Mammary epithelial cell (primary cell): ENCODE measurements at regions of chr5 and their contacts with region 1.

Region 1: GRCh38 chr5:34522599-34523386 is 133.3 kb upstream of the RAI14 start:
- DNase-seq: peak; percentile 73
- H3K4me3 ChIP-seq: no peak overlapping the region
- H3K27ac ChIP-seq: no peak overlapping the region
- H3K4me1 ChIP-seq: peaks cover 19% of the 10 kb centered on the region
- H3K27me3 ChIP-seq: no peaks in the 10 kb centered on the region
- CTCF ChIP-seq: peak; percentile 71 to 74

Region 2: DNA sequence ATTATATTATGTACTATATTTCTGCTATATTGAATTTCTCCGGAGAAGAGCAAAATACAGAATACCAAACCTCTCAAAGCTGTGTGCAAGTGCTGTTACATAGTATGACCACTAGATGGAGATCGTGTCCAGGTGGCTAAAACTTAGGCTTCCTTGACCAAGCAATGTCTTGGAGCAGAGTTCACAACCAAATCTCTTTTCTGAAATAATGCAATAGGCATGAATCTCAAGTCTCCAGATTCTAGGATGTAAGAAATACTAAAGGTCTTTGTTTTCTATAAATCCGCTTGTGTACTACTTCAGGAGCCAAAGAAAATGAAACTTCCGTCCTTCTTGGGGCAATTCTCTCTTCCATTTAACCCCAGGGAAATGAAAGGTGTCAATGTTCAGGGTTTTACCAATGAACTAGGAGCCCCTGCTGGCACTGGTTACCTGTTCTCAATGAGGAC is 48.2 kb before region 1 on chr5:
- CTCF ChIA-PET with region 1: no interaction called
- dilution Hi-C with region 1: no loop called
- in situ Hi-C with region 1: no loop called
- intact Hi-C with region 1: loop called (anchors 1 kb)
- DNase-seq: peak; percentile 43
- H3K4me3 ChIP-seq: no peak overlapping the region
- H3K27ac ChIP-seq: no peak overlapping the region
- H3K4me1 ChIP-seq: no peaks in the 10 kb centered on the region
- H3K27me3 ChIP-seq: no peaks in the 10 kb centered on the region
- CTCF ChIP-seq: peak; percentile 96 to 98

Region 3: GRCh38 chr5:34608859-34609648 is 86.3 kb after region 1 on chr5:
- CTCF ChIA-PET with region 1: no interaction called
- dilution Hi-C with region 1: no loop called
- in situ Hi-C with region 1: no loop called
- intact Hi-C with region 1: loop called (anchors 5 kb)
- DNase-seq: peak; percentile 82
- H3K4me3 ChIP-seq: no peak overlapping the region
- H3K27ac ChIP-seq: peak overlapping the region; percentile 59
- H3K4me1 ChIP-seq: peaks cover 33% of the 10 kb centered on the region
- H3K27me3 ChIP-seq: no peaks in the 10 kb centered on the region
- CTCF ChIP-seq: no peak

Region 4: GRCh38 chr5:34838785-34839714 is 316.3 kb after region 1 on chr5 and contains the start of gene TTC23L:
- CTCF ChIA-PET with region 1: no interaction called
- dilution Hi-C with region 1: no loop called
- in situ Hi-C with region 1: no loop called
- intact Hi-C with region 1: loop called (anchors 10 kb)
- DNase-seq: peak; percentile 91
- H3K4me3 ChIP-seq: peak within 1 kb of the TSS; percentile 42 to 62 (median 57)
- H3K27ac ChIP-seq: peak within 1 kb of the TSS; percentile 46
- H3K4me1 ChIP-seq: no peaks in the 10 kb centered on the region
- H3K27me3 ChIP-seq: no peaks in the 10 kb centered on the region
- CTCF ChIP-seq: no peak
- total RNA-seq, gene TTC23L: 0.17 TPM in 1 of 2 donors, not detected in the other